Activated CD4-positive, alpha-beta memory T cell treated with anti-CD3 and anti-CD28 coated beads, Interleukin-2, amount 10 ng/mL, durations not matched to agents 7 days and 5 days (primary cell): ENCODE measurements at regions of chr2 and their contacts with region 1.

Region 1: GRCh38 chr2:68594674-68595492 is 48.5 kb upstream of the PROKR1 start:
- DNase-seq: peak; percentile 63
- H3K4me3 Mint-ChIP-seq: peak overlapping the region; percentile 34
- H3K27ac Mint-ChIP-seq: no peak overlapping the region
- H3K4me1 Mint-ChIP-seq: peaks cover 11% of the 10 kb centered on the region
- H3K27me3 Mint-ChIP-seq: peaks cover 12% of the 10 kb centered on the region

Region 2: GRCh38 chr2:68251187-68251854 is 343.6 kb before region 1 on chr2:
- CTCF ChIA-PET with region 1: no interaction called
- POLR2A ChIA-PET with region 1: no interaction called
- DNase-seq: peak; percentile 83
- H3K4me3 Mint-ChIP-seq: peak overlapping the region; percentile 89
- H3K27ac Mint-ChIP-seq: peak overlapping the region; percentile 98
- H3K4me1 Mint-ChIP-seq: peaks cover 39% of the 10 kb centered on the region
- H3K27me3 Mint-ChIP-seq: no peaks in the 10 kb centered on the region

Region 3: GRCh38 chr2:68605939-68606338 is 11.1 kb after region 1 on chr2:
- CTCF ChIA-PET with region 1: interaction called, 11 read pairs
- POLR2A ChIA-PET with region 1: no interaction called
- DNase-seq: no peak
- H3K4me3 Mint-ChIP-seq: no peak overlapping the region
- H3K27ac Mint-ChIP-seq: no peak overlapping the region
- H3K4me1 Mint-ChIP-seq: no peaks in the 10 kb centered on the region
- H3K27me3 Mint-ChIP-seq: peaks cover 10% of the 10 kb centered on the region